Heart right ventricle (tissue), 16 donors: ENCODE measurements at regions of chr1 and their contacts with region 1.

Region 1: DNA sequence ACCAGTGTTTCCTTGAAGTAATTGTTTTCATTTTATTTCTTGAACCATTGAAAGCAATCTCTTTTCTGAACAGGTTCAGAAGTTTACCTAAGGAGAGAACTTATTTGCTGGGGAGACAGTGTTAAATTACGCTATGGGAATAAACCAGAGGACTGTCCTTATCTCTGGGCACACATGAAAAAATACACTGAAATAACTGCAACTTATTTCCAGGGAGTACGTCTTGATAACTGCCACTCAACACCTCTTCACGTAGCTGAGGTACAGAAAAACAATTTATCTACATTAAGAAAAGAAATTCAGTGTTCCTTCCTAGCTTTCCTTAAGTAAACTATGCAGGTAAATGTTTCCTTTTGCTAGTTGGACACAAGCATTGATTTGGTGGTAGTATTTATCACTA is 27.4 kb downstream of the AGL start:
- DNase-seq: no peak
- ATAC-seq: no peak
- H3K4me3 ChIP-seq: no peak overlapping the region
- H3K27ac ChIP-seq: no peak overlapping the region
- H3K4me1 ChIP-seq: peaks cover 0 to 7% (median 0%) of the 10 kb centered on the region in 9 donors
- H3K27me3 ChIP-seq: no peaks in the 10 kb centered on the region
- CTCF ChIP-seq: no peak

Region 2: DNA sequence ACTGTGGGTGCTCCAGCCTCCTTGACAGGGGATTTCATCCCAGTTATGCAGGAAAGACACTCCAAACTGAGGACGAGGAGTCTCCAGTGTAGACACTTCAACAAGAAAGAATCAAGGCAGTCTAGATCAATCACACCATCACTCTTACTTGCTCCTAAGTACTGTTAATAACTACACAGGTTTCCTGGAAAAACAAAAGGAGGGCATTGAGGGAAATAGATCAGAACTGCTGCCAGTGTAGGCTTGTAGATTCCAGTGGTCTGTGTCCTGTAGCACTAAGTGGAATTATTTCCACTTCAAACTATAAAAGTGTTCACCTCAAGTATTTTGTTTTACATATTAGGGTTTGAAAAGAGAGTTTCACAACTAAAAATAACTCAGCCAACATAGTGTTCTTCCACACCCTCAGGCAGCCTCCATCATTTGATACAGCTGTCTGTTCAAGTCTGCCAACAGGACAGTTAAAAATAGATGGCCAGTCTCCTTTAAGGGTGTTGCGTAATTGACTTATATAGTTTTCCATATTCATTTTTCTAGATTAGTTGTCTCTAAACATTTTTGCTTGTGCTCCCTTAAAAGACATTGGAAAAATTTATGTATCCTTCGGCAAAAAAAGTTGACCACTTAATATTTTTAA is 59.4 kb before region 1 on chr1:
- intact Hi-C with region 1: loop called in 1 of 10 experiments (anchors 2 kb)
- DNase-seq: peak in 1 of 2 donors; percentile 9
- ATAC-seq: peak; percentile 34 to 94 (median 84)
- H3K4me3 ChIP-seq: no peak overlapping the region
- H3K27ac ChIP-seq: peak overlapping the region in 4 of 10 donors; percentile 45 to 63 (median 56)
- H3K4me1 ChIP-seq: peaks cover 0 to 8% (median 0%) of the 10 kb centered on the region in 9 donors
- H3K27me3 ChIP-seq: peaks cover 0 to 5% (median 0%) of the 10 kb centered on the region in 7 donors
- CTCF ChIP-seq: no peak